ENCODE measurements at regions of chr6 and their contacts with region 1.

Region 1: GRCh38 chr6:110389689-110390382 is 25.5 kb downstream of the DDO start:
- DNase-seq: no peak
- ATAC-seq: peak; percentile 51
- H3K4me3 Mint-ChIP-seq: no peak overlapping the region
- H3K27ac Mint-ChIP-seq: peak overlapping the region; percentile 69
- H3K4me1 Mint-ChIP-seq: peaks cover 23% of the 10 kb centered on the region
- H3K27me3 Mint-ChIP-seq: no peaks in the 10 kb centered on the region

Region 2: GRCh38 chr6:110179401-110180227 is 210.2 kb before region 1 on chr6 and contains the start of gene WASF1:
- CTCF ChIA-PET with region 1: interaction called, 41 read pairs
- POLR2A ChIA-PET with region 1: no interaction called
- DNase-seq: peak; percentile 93
- ATAC-seq: peak; percentile 91
- H3K4me3 Mint-ChIP-seq: no peak within 1 kb of the TSS
- H3K27ac Mint-ChIP-seq: peak within 1 kb of the TSS; percentile 5
- H3K4me1 Mint-ChIP-seq: peaks cover 8% of the 10 kb centered on the region
- H3K27me3 Mint-ChIP-seq: peaks cover 12% of the 10 kb centered on the region
- total RNA-seq, gene WASF1: 0.50 to 0.76 TPM

Region 3: DNA sequence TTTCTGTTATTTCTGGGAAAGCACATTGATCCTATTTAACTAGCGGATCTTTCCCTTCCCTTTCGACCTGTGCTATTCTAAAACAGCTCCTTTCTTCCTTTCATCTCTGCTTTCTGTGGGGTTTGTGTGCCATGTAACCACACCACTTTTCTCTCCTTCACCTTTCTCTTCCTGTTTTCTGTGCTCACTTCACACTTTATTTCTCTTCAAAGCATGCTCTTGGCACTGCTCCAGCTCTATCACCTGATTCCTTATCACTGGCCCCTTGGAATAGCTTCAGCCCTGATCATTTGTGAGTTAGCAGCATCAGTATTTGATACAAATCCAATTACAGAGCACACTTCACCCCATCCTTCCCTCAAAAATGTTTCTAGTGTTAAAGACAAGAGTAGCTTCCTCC is 23.6 kb before region 1 on chr6:
- CTCF ChIA-PET with region 1: interaction called, 20 read pairs
- POLR2A ChIA-PET with region 1: no interaction called
- DNase-seq: no peak
- ATAC-seq: no peak
- H3K4me3 Mint-ChIP-seq: no peak overlapping the region
- H3K27ac Mint-ChIP-seq: peak overlapping the region; percentile 0
- H3K4me1 Mint-ChIP-seq: peaks cover 19% of the 10 kb centered on the region
- H3K27me3 Mint-ChIP-seq: peaks cover 17% of the 10 kb centered on the region